Motor neuron (in vitro differentiated cells): ENCODE measurements at regions of chr1 and their contacts with region 1.

Region 1: DNA sequence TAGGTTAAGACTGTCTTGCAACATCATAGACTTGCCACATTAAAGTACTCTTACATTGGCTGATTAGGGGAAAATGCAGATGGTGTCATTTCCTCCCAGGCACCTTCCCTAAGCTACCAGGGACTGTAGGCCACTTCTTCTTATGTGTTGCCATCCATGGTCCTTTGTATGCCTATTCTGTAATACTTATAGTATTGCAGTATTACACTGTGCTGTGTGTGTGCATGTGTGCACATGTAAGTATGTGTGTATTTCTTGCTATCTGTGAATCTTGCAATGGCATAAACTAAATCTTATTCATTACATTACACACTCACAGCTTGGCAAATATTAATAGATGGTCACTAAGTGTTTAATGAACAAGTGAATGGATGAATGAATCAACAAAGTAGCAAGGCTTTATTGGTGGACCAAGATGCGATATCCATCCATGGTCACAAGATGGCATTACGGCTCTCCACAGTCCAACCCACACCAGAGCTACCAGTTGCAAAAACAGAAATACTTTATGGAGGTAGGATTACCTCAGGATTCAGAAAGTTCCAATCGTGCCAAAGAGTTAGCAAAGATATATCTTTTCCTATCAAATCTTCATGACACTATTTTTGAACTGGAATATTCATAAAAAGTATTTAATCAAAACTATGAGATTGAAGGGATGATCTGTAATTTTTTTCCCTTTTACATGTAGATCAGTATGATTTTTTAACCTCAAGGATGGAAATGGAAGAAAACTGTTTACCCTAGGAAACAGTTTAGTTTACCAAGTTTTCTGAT is 160.2 kb downstream of the DENND1B start:
- ATAC-seq: peak; percentile 53 to 88 (median 73)
- H3K4me3 ChIP-seq: no peak overlapping the region
- H3K27ac ChIP-seq: no peak overlapping the region
- H3K4me1 ChIP-seq: peaks cover 0 to 18% of the 10 kb centered on the region in 2 donors

Region 2: DNA sequence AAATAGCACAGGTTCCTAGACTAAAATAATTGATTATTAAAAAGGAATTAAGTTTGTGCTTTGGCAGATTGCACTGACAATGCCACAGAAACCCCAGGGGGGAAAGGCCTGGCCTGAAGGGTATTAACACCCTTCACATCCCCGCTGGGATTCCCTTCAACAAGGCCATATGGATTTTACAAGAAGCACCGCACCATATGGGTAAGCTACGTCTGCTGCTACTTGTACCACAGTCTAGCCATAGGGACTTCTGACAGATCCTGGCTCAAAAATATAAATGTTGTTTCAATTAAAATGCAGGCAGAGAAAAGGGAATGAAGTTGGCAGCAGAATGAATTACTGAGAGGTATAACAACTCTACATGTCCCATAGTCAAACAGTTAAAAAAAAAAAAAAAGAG is 59.2 kb after region 1 on chr1:
- in situ Hi-C with region 1: no loop called
- ATAC-seq: no peak
- H3K4me3 ChIP-seq: no peak overlapping the region
- H3K27ac ChIP-seq: no peak overlapping the region
- H3K4me1 ChIP-seq: peaks cover 3 to 13% of the 10 kb centered on the region in 2 donors

Region 3: GRCh38 chr1:197783510-197783948 is 168.4 kb after region 1 on chr1:
- in situ Hi-C with region 1: no loop called
- ATAC-seq: peak in 3 of 8 experiments; percentile 82 to 95 (median 83)
- H3K4me3 ChIP-seq: no peak overlapping the region
- H3K27ac ChIP-seq: no peak overlapping the region
- H3K4me1 ChIP-seq: no peaks in the 10 kb centered on the region

Region 4: DNA sequence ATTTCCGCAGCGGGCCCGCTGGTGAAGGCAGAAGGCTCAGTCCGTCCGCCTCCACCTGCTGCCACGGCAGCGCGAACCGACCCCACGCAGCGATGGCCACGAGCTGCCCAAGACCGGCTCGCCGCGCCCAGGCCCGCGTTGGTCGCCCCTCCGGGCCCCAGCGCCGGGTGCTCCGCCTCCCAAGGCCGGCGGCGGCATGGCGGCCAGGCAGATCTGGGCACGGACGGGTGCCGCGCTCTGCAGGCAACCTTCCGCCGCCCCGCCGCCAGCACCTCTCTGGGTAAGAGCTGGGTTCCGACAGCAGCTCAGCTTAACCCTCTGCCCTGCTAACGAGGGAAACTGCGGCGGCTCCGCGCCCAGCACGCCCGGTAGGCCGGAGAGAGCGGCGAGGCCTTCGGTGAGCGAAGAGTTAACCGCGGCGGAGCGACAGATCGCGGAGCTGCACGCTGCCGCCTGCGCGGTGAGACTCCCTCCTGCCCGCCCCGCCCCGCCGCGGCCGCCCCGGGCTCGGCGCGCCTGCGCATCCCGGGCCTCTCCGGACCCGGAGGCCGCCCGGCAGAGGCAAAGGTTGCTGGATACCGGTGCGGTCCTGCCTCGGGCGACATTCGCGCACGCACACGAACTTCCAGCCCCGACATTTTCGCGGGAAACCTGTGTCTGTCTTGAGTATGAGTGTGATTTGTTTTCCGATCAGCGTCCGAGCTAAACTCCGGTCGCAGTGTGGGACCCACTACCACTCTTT is 287.5 kb after region 1 on chr1 and contains the start of gene C1orf53:
- in situ Hi-C with region 1: loop called in 4 of 9 experiments (anchors 25 kb)
- ATAC-seq: peak; percentile 93 to 96 (median 95)
- H3K4me3 ChIP-seq: peak within 1 kb of the TSS; percentile 69 to 97 (median 77)
- H3K27ac ChIP-seq: peak within 1 kb of the TSS; percentile 89 to 95
- H3K4me1 ChIP-seq: peaks cover 8 to 9% of the 10 kb centered on the region in 2 donors
- total RNA-seq, gene C1orf53: 4.3 to 40.9 (median 10.1) TPM

Region 5: GRCh38 chr1:197924516-197925123 is 309.5 kb after region 1 on chr1:
- in situ Hi-C with region 1: loop called in 5 of 9 experiments (anchors 25 kb)
- ATAC-seq: peak in 6 of 8 experiments; percentile 37 to 88 (median 64)
- H3K4me3 ChIP-seq: no peak overlapping the region
- H3K27ac ChIP-seq: no peak overlapping the region
- H3K4me1 ChIP-seq: peaks cover 0 to 2% of the 10 kb centered on the region in 2 donors